Naive thymus-derived CD8-positive, alpha-beta T cell (primary cell): ENCODE measurements at regions of chr22 and their contacts with region 1.

Region 1: GRCh38 chr22:22810018-22810427 is 77.6 kb upstream of the IGLL5 start:
- DNase-seq: peak in 9 of 10 donors; percentile 57 to 90 (median 81)
- ATAC-seq: peak; percentile 76 to 99
- H3K4me3 Mint-ChIP-seq: peak overlapping the region in 1 of 10 donors; percentile 73
- H3K27ac Mint-ChIP-seq: peak overlapping the region in 6 of 10 donors; percentile 55 to 81 (median 70)
- H3K4me1 Mint-ChIP-seq: peaks cover 14 to 59% (median 45%) of the 10 kb centered on the region in 4 donors
- H3K27me3 Mint-ChIP-seq: no peaks in the 10 kb centered on the region

Region 2: GRCh38 chr22:22877523-22878210 is 67.6 kb after region 1 on chr22:
- POLR2A ChIA-PET with region 1: interaction called, 16 read pairs
- DNase-seq: peak; percentile 56 to 88 (median 78)
- ATAC-seq: peak; percentile 38 to 72
- H3K4me3 Mint-ChIP-seq: no peak overlapping the region
- H3K27ac Mint-ChIP-seq: no peak overlapping the region
- H3K4me1 Mint-ChIP-seq: peaks cover 0 to 37% (median 3%) of the 10 kb centered on the region in 4 donors
- H3K27me3 Mint-ChIP-seq: no peaks in the 10 kb centered on the region